ENCODE measurements at regions of chr15 and their contacts with region 1.

Region 1: GRCh38 chr15:79853458-79854328 is 43.1 kb downstream of the MTHFS start:
- DNase-seq: peak; percentile 17 to 88 (median 72)

Region 2: DNA sequence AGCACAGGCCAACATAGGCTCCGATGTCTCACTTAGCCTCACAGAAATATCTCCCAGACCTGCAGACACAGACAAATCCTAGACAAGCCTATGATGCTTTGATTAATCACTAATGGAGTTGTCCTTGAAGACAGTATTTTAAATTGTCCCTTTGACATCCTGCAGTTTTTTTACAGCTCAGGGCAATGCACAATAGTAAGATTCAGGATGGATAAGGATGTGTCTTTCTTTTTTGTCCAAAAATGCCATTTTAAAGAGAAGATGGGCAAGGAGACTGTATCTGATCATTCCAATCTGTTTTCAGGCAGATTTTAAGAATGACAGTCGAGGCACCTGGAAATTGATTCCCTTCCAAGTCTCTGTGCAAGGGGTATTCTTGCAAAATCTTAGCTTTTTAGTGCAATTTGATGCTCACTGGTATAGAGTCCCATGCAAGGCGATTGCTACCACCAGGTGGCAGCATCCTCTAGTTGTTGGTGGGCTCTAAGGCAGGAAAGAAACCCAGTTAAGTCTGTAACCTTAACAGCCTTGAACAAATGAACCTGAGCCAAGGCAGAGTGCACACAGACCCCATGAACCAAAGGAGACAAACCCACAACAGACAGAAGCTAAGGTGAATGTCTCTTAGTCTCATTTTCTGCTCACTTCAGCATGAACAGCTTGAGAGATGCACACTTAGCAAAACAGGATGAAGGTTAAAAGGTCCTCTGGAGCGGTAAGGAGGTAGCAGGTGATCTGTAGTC is 472.8 kb before region 1 on chr15:
- intact Hi-C with region 1: loop called (anchors 5 kb)
- DNase-seq: peak; percentile 47 to 95 (median 89)

Measured in head of caudate nucleus (tissue), 42 donors.